H1 (cell line): ENCODE measurements at regions of chr15 and their contacts with region 1.

Region 1: GRCh38 chr15:31128919-31129768 is 27.6 kb upstream of the TRPM1 start:
- DNase-seq: peak; percentile 47 to 97
- H3K4me3 ChIP-seq: no peak overlapping the region
- H3K27ac ChIP-seq: no peak overlapping the region
- H3K4me1 ChIP-seq: no peaks in the 10 kb centered on the region; a peak in 3 of 7 replicates
- H3K27me3 ChIP-seq: no peaks in the 10 kb centered on the region
- CTCF ChIP-seq: peak; percentile 87 to 92 (median 89)
- EP300 ChIP-seq: no peak
- POLR2A ChIP-seq: no peak
- RAD21 ChIP-seq: peak; percentile 94 to 98

Region 2: GRCh38 chr15:30794388-30794787 is 334.8 kb before region 1 on chr15:
- CTCF ChIA-PET with region 1: interaction called, 13 read pairs
- POLR2A ChIA-PET with region 1: no interaction called
- DNase-seq: no peak
- H3K4me3 ChIP-seq: no peak overlapping the region
- H3K27ac ChIP-seq: no peak overlapping the region
- H3K4me1 ChIP-seq: no peaks in the 10 kb centered on the region
- H3K27me3 ChIP-seq: no peaks in the 10 kb centered on the region
- CTCF ChIP-seq: no peak
- EP300 ChIP-seq: no peak
- POLR2A ChIP-seq: no peak
- RAD21 ChIP-seq: no peak

Region 3: GRCh38 chr15:30940359-30940758 is 188.8 kb before region 1 on chr15:
- CTCF ChIA-PET with region 1: interaction called, 40 read pairs
- POLR2A ChIA-PET with region 1: no interaction called
- DNase-seq: no peak
- H3K4me3 ChIP-seq: no peak overlapping the region
- H3K27ac ChIP-seq: no peak overlapping the region
- H3K4me1 ChIP-seq: no peaks in the 10 kb centered on the region
- H3K27me3 ChIP-seq: no peaks in the 10 kb centered on the region
- CTCF ChIP-seq: no peak
- EP300 ChIP-seq: no peak
- POLR2A ChIP-seq: no peak
- RAD21 ChIP-seq: no peak

Region 4: GRCh38 chr15:30969696-30970095 is 159.4 kb before region 1 on chr15:
- CTCF ChIA-PET with region 1: interaction called, 14 read pairs
- POLR2A ChIA-PET with region 1: no interaction called
- DNase-seq: no peak
- H3K4me3 ChIP-seq: no peak overlapping the region
- H3K27ac ChIP-seq: no peak overlapping the region
- H3K4me1 ChIP-seq: no peaks in the 10 kb centered on the region
- H3K27me3 ChIP-seq: no peaks in the 10 kb centered on the region
- CTCF ChIP-seq: no peak
- EP300 ChIP-seq: no peak
- POLR2A ChIP-seq: no peak
- RAD21 ChIP-seq: no peak

Region 5: DNA sequence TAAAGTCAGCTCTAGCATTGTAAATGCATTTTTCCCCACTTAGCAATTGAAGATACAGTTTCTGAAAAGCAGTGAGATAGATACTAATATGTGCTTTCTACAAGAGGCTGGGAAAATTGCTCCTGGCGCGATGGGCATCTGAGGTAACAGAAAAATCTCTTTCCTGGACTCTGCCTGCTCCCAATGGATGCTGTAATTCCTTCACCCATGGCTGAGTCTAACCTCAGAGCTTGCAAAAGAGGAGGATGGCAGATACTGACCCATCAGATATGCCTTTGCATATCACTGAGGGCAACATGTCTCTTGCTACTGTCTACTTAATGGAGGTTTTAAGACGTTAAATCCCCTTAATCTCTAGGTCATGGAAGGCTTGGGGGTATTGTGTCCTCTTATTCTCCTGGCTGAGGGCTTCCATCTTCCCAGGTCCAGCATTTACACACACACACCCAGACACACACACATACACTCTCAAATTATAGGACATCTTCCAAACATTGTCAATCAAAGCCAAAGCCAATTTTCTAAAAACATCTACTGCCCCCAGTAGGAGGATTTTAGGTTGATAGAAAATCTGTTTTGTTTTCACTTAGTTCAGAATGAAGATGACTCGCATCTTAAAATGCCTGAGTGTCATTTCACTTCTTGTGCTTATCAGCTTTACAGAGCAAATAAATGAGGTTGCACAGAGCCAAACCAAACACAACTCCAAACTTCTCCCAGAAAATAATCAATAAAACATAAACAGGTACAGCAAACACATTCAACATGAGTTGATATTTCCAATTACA is 30.0 kb before region 1 on chr15:
- CTCF ChIA-PET with region 1: interaction called, 10 read pairs
- POLR2A ChIA-PET with region 1: no interaction called
- DNase-seq: no peak
- H3K4me3 ChIP-seq: no peak overlapping the region
- H3K27ac ChIP-seq: no peak overlapping the region
- H3K4me1 ChIP-seq: peaks cover 0 to 10% (median 3%) of the 10 kb centered on the region in 4 experiments; a peak in 3 of 7 replicates
- H3K27me3 ChIP-seq: no peaks in the 10 kb centered on the region
- CTCF ChIP-seq: no peak
- EP300 ChIP-seq: no peak
- POLR2A ChIP-seq: no peak
- RAD21 ChIP-seq: no peak

Region 6: DNA sequence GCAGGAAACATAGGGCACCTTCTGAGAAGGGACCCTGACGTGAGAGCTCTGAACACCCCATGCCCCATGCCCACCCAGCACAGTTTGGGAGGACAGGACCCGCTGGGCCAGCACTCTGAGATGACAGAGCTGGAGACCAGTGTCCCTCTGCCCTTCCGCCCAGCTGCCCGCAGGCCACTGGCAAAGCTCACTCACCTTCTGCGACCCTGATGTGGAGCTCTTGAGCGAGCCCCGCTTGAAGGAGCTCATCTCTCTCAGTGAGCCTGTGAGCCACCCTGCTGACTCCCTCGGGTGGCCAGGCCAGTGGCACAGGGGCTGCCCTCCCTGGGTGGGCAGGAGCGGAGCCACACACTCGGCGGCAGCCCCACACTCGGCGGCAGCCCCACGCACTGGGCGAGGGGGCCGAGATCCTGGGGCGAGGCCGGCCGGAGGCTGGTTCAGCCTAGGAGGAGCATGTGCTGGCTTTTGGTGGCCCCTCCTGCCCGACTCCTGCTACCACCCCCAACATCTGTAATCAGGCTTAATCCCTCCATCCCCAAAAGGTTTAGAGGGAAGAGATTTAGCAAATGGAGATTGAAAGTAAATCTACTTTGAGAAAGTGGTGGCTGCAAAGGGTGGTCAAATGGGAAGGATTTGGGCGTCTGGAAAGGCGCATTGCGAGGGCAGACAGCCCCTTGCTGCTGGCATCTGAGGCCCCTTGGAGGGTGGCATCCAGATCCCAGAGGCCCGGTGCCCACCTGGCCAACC is 31.7 kb after region 1 on chr15:
- CTCF ChIA-PET with region 1: no interaction called
- POLR2A ChIA-PET with region 1: no interaction called
- DNase-seq: no peak
- H3K4me3 ChIP-seq: no peak overlapping the region
- H3K27ac ChIP-seq: no peak overlapping the region
- H3K4me1 ChIP-seq: peaks cover 0 to 10% (median 6%) of the 10 kb centered on the region in 4 experiments; a peak in 6 of 7 replicates
- H3K27me3 ChIP-seq: no peaks in the 10 kb centered on the region
- CTCF ChIP-seq: no peak
- EP300 ChIP-seq: no peak
- POLR2A ChIP-seq: no peak
- RAD21 ChIP-seq: no peak

Region 7: GRCh38 chr15:31200735-31201151 is 71.6 kb after region 1 on chr15:
- CTCF ChIA-PET with region 1: interaction called, 13 read pairs
- POLR2A ChIA-PET with region 1: no interaction called
- DNase-seq: peak in 1 of 2 experiments; percentile 76
- H3K4me3 ChIP-seq: no peak overlapping the region
- H3K27ac ChIP-seq: no peak overlapping the region
- H3K4me1 ChIP-seq: peaks cover 0 to 2% (median 0%) of the 10 kb centered on the region in 4 experiments; a peak in 1 of 7 replicates
- H3K27me3 ChIP-seq: no peaks in the 10 kb centered on the region
- CTCF ChIP-seq: peak; percentile 66 to 72 (median 68)
- EP300 ChIP-seq: no peak
- POLR2A ChIP-seq: no peak
- RAD21 ChIP-seq: peak; percentile 80 to 84

Region 8: GRCh38 chr15:31296646-31297574 is 167.8 kb after region 1 on chr15:
- CTCF ChIA-PET with region 1: no interaction called
- POLR2A ChIA-PET with region 1: no interaction called
- DNase-seq: peak in 1 of 2 experiments; percentile 49
- H3K4me3 ChIP-seq: no peak overlapping the region
- H3K27ac ChIP-seq: no peak overlapping the region
- H3K4me1 ChIP-seq: peaks cover 2 to 17% (median 12%) of the 10 kb centered on the region in 4 experiments
- H3K27me3 ChIP-seq: no peaks in the 10 kb centered on the region; a peak in 1 of 7 replicates
- CTCF ChIP-seq: no peak
- EP300 ChIP-seq: no peak
- POLR2A ChIP-seq: no peak
- RAD21 ChIP-seq: no peak